Thyroid gland (tissue), 4 donors: ENCODE measurements at regions of chr2 and their contacts with region 1.

Region 1: GRCh38 chr2:207083361-207084110 is 82.2 kb downstream of the KLF7 start:
- DNase-seq: no peak
- H3K4me3 ChIP-seq: no peak overlapping the region
- H3K27ac ChIP-seq: peak overlapping the region in 1 of 3 donors; percentile 26
- H3K4me1 ChIP-seq: peaks cover 0 to 1% of the 10 kb centered on the region in 2 donors
- H3K27me3 ChIP-seq: no peaks in the 10 kb centered on the region
- CTCF ChIP-seq: no peak
- POLR2A ChIP-seq: no peak

Region 2: GRCh38 chr2:206915121-206915520 is 168.4 kb before region 1 on chr2:
- intact Hi-C with region 1: no loop called
- DNase-seq: no peak
- H3K4me3 ChIP-seq: no peak overlapping the region
- H3K27ac ChIP-seq: no peak overlapping the region
- H3K4me1 ChIP-seq: no peaks in the 10 kb centered on the region
- H3K27me3 ChIP-seq: no peaks in the 10 kb centered on the region
- CTCF ChIP-seq: no peak
- POLR2A ChIP-seq: no peak

Region 3: DNA sequence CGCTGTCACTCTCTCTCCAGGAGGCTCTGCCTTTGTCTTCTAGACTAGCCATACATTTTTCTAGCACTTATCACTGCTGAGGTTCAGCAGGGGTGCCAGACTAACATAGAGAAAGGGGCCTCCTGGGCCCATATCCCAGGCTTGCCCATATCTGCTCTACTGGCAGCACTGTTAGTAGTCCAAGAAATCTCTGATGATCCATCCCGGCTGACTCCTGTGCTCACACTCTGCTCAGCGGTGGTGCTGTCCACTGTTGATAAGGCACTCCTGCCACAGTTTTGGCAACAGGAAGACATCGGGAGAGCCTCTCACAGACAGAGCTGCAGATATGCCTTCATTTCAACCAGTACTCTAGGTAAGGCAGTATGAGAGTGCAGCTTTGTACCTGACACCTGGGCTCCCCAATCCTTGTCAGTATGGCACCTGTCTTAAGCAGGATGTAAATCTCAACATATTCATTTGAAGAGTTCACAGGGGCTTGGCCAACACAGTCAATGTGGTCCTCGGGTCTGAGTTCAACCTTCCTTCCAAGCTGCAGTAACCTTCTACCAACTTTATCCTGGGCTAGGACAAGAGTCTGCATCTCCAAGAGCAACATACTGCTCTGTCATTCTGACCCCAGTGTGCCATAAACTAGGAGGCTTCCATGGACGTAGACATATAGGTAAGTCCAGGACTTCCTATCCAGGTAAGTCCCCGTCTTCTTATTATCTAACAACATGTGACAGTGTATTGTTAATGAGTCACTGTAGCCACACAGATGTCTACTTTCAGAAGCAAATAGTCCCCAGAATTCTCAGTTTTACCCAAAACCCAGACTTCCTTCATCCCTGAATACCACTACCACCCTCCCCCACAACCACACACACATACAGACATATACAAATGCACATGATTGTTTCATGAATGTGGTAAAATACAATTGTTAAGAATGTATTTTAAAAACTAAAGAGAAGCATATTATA is 66.0 kb after region 1 on chr2:
- intact Hi-C with region 1: loop called (anchors 10 kb)
- DNase-seq: no peak
- H3K4me3 ChIP-seq: no peak overlapping the region
- H3K27ac ChIP-seq: peak overlapping the region in 1 of 3 donors; percentile 3
- H3K4me1 ChIP-seq: peaks cover 29 to 62% of the 10 kb centered on the region in 2 donors
- H3K27me3 ChIP-seq: no peaks in the 10 kb centered on the region
- CTCF ChIP-seq: no peak
- POLR2A ChIP-seq: no peak